ENCODE measurements at regions of chr5 and their contacts with region 1.

Region 1: DNA sequence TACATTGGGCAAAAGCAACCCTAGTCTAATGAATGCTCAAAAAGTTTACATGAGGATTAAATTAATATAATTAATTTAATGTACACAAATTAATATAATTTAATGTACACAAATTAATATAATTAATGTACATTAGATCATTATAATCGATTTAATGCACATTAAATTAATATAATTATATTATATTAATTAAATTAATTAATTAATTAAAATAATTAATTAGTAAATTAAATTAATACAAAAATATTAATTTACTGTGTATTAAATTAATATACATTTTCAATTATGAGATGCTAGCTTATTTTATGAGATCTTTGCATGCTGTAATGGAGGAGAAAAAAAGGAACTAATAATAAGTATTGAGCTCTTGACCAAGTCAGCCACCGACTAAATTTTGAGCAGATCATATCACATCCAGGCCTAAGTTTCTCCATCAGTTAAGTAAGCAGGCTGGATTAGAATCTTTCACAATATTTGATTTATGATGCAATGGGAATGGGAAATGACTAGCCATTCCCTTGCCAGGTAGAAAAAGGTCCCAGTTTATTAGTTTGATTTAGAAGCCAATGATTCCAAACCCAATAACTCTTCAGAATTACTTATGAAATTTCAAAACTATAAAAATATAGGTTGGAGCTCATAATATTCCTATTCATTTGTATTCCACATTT is 533.4 kb upstream of the GRIA1 start:
- DNase-seq: no peak
- ATAC-seq: no peak
- H3K4me3 ChIP-seq: no peak overlapping the region
- H3K27ac ChIP-seq: no peak overlapping the region
- H3K4me1 ChIP-seq: no peaks in the 10 kb centered on the region
- H3K27me3 ChIP-seq: no peaks in the 10 kb centered on the region
- CTCF ChIP-seq: no peak

Region 2: GRCh38 chr5:152978141-152978835 is 21.2 kb after region 1 on chr5:
- CTCF ChIA-PET with region 1: no interaction called
- POLR2A ChIA-PET with region 1: no interaction called
- in situ Hi-C with region 1: no loop called
- intact Hi-C with region 1: loop called (anchors 1 kb)
- DNase-seq: no peak
- ATAC-seq: no peak
- H3K4me3 ChIP-seq: no peak overlapping the region
- H3K27ac ChIP-seq: no peak overlapping the region
- H3K4me1 ChIP-seq: no peaks in the 10 kb centered on the region
- H3K27me3 ChIP-seq: no peaks in the 10 kb centered on the region
- CTCF ChIP-seq: no peak

Region 3: GRCh38 chr5:152994033-152994680 is 37.1 kb after region 1 on chr5:
- CTCF ChIA-PET with region 1: no interaction called
- POLR2A ChIA-PET with region 1: no interaction called
- in situ Hi-C with region 1: no loop called
- intact Hi-C with region 1: no loop called
- DNase-seq: no peak
- ATAC-seq: no peak
- H3K4me3 ChIP-seq: no peak overlapping the region
- H3K27ac ChIP-seq: no peak overlapping the region
- H3K4me1 ChIP-seq: no peaks in the 10 kb centered on the region; the same call in 1 of the 2 replicates
- H3K27me3 ChIP-seq: no peaks in the 10 kb centered on the region
- CTCF ChIP-seq: no peak

Region 4: DNA sequence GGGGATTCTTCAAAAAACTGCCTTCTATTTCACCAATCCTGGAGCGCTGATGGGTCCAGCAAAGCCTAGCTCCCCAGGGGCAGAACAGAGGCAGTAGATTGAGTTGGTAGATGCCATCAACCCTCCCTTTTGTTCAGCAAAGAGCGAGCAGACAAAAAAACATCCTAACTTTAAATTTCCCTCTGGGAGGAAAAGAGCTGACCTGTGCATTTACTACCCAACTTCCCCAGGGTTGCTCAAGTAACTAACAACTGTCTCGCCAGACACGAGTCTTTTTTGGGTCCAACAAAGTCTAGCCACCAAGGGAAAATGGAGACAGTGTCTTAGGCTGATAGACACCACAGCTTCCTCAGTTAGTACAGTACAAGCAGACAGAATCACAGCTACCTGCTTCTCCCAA is 57.1 kb after region 1 on chr5:
- CTCF ChIA-PET with region 1: no interaction called
- POLR2A ChIA-PET with region 1: no interaction called
- in situ Hi-C with region 1: no loop called
- intact Hi-C with region 1: no loop called
- DNase-seq: no peak
- ATAC-seq: no peak
- H3K4me3 ChIP-seq: no peak overlapping the region
- H3K27ac ChIP-seq: no peak overlapping the region
- H3K4me1 ChIP-seq: no peaks in the 10 kb centered on the region
- H3K27me3 ChIP-seq: no peaks in the 10 kb centered on the region
- CTCF ChIP-seq: no peak